ENCODE measurements at regions of chr4 and their contacts with region 1.

Region 1: DNA sequence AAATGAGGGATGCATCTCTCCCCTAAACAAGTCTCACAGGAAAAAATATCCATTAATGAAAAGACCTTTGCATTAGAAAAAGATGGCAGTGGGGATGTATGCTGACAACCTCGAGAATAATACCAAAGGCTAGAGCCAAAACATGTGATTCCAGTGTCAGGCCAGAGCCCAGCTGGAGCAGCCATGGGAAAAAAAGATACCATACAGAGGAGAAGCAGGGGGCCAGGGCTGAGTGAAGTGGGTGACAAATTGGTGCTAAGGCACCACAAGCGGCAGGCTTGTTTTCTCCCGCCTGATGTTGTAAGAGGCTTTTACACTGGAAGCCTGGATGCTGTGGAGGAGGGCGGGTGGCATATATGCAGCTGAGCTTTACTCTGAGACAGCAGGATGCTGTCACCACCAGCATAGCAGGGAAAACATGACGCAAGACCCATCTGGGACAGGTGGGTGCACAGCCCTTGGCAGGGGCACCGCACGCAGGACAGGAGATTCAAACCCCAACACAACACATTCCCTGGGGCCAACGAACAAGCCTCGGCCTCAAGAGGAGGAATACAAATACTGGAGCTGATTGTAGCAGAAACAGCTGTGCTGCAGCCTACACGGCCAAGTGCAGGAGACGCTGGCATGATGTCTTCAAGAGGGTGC is 91.9 kb downstream of the TSPAN5 start:
- DNase-seq: peak in 4 of 5 donors; percentile 44 to 57 (median 50)
- H3K4me3 ChIP-seq: no peak overlapping the region
- H3K27ac ChIP-seq: peak overlapping the region; percentile 38 to 59
- H3K4me1 ChIP-seq: peaks cover 24% of the 10 kb centered on the region
- H3K27me3 ChIP-seq: no peaks in the 10 kb centered on the region
- CTCF ChIP-seq: no peak
- EP300 ChIP-seq: no peak
- POLR2A ChIP-seq: no peak

Region 2: DNA sequence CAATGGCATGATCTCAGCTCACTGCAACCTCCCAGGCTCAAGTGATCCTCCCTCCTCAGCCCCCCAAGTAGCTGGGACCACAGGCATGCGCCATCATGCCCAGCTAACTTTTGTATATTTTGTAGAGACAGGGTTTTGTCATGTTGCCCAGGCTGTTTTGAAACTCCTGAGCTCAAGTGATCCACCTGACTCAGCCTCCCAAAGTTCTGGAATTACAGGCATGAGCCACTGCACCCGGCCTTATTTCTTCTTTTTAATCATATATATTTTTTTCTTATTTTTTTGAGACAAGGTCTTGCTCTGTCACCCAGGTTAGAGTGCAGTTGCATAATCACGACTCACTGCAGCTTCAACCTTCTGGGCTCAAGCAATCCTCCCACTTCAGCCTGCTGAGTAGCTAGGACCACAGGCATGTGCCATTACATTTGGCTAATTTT is 92.1 kb before region 1 on chr4:
- intact Hi-C with region 1: loop called in 1 of 4 experiments (anchors 10 kb)
- DNase-seq: no peak
- H3K4me3 ChIP-seq: no peak overlapping the region
- H3K27ac ChIP-seq: no peak overlapping the region
- H3K4me1 ChIP-seq: no peaks in the 10 kb centered on the region
- H3K27me3 ChIP-seq: no peaks in the 10 kb centered on the region
- CTCF ChIP-seq: no peak
- EP300 ChIP-seq: no peak
- POLR2A ChIP-seq: no peak

Region 3: DNA sequence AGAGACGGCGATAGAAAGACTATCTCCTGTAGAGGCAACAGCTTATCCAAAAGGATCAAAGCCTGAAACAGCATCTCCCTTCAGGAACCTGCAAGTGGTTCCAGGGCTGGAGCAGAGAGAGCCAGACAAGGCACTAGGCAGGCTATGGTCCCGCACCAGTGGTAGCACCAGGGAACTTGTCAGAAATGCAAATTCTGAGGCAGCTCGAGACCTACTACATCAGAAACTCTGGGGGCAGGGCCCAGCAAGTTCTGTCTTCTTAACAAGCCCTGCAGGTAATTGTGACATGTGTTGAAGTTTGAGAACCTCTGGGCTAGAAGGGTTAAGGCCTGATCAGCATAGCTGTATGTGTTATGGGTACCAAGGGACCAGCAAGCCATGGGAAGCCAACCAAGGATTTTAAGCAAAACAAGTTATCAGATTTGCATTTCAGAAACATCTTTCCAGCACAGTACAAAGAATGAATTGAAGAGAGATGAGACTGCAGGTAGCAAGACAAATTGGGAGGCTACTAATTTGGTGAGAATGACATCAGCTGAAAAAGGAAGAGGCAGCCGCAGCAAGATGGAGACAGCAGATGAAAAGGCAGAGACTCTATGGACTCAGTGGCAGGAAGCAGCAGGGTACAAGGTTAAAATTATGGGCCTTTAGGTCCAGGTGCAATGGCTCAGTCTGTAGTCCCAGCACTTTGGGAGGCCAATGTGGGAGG is 47.8 kb before region 1 on chr4:
- intact Hi-C with region 1: loop called in 1 of 4 experiments (anchors 5 kb)
- DNase-seq: no peak
- H3K4me3 ChIP-seq: no peak overlapping the region
- H3K27ac ChIP-seq: peak overlapping the region; percentile 37 to 80
- H3K4me1 ChIP-seq: peaks cover 30% of the 10 kb centered on the region
- H3K27me3 ChIP-seq: no peaks in the 10 kb centered on the region
- CTCF ChIP-seq: no peak
- EP300 ChIP-seq: no peak
- POLR2A ChIP-seq: no peak

Region 4: GRCh38 chr4:98626350-98626749 is 59.9 kb after region 1 on chr4:
- intact Hi-C with region 1: no loop called
- DNase-seq: peak; percentile 79 to 86 (median 81)
- H3K4me3 ChIP-seq: no peak overlapping the region
- H3K27ac ChIP-seq: peak overlapping the region; percentile 8 to 72
- H3K4me1 ChIP-seq: peaks cover 17% of the 10 kb centered on the region
- H3K27me3 ChIP-seq: no peaks in the 10 kb centered on the region
- CTCF ChIP-seq: no peak
- EP300 ChIP-seq: no peak
- POLR2A ChIP-seq: no peak

Region 5: GRCh38 chr4:98658287-98659105 is 92.0 kb after region 1 on chr4 and contains the start of gene TSPAN5:
- intact Hi-C with region 1: loop called in 1 of 4 experiments (anchors 10 kb)
- DNase-seq: peak; percentile 75 to 86 (median 83)
- H3K4me3 ChIP-seq: peak within 1 kb of the TSS; percentile 84
- H3K27ac ChIP-seq: peak within 1 kb of the TSS; percentile 85 to 88
- H3K4me1 ChIP-seq: peaks cover 13% of the 10 kb centered on the region
- H3K27me3 ChIP-seq: no peaks in the 10 kb centered on the region
- CTCF ChIP-seq: no peak
- EP300 ChIP-seq: no peak
- POLR2A ChIP-seq: no peak
- total RNA-seq, gene TSPAN5: 34.0 to 69.5 (median 48.2) TPM

Measured in ovary (tissue), 10 donors.